Endothelial cell of umbilical vein (primary cell): ENCODE measurements at regions of chr2 and their contacts with region 1.

Region 1: DNA sequence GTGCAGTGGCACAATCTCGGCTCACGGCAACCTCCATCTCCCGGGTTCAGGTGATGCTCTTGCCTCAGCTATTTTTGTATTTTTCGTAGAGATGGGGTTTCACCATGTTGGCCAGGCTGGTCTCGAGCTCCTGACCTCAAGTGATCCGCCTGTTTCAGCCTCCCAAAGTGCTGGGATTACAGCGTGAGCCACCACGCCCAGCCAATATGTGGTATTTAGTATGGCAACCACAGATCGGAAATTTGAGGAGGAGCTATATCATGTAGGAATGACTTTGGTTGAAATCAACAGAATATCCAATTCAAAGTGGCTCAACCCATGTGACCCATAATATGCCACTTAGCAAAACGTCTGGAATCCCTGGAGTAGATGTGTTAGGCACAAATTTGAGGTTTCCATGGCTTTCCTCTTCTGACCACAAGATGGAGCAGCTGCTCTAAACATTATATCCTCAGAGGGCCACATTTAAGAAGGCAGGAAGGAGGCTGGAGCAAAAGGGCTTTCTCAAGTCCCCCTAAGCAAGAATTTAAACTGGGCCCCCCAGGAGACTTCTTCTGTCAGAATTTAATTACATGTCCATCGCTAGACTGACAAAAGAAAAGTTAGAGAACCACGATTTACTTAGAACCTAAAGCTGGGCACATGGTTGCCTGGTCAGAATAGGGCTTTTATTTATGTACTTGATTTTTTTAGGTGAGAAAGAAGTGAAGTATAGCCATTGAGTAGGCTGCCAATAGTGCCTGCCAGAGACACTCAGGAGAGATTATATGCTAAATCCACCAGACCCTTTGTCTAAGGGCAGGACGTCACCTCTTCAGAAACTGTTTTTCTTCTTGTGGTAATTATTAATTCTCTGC is 49.6 kb upstream of the ITSN2 start:
- DNase-seq: peak; percentile 68
- H3K4me3 ChIP-seq: no peak overlapping the region
- H3K27ac ChIP-seq: no peak overlapping the region
- H3K4me1 ChIP-seq: no peaks in the 10 kb centered on the region
- H3K27me3 ChIP-seq: no peaks in the 10 kb centered on the region
- CTCF ChIP-seq: peak; percentile 69 to 74
- POLR2A ChIP-seq: no peak

Region 2: DNA sequence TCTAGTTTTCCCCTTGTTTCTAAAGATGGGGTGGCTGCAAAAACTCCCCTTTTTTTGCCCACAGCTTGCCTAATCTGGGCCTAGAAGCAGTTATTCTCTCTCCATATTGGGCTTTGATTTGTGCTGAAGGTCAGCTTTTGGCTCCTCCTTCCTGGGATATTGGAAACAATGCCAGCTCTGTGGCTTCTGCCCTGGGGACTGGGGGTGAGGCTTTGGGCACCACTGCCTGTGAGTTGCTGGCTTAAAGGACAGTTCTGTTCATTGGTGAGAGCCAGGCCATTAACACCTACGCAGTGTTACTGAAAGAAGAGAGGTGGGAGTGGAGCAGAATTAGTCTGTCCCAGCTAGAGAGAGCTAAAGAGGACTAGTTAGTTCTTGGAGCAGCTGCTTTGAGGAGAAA is 465.4 kb before region 1 on chr2:
- CTCF ChIA-PET with region 1: no interaction called
- POLR2A ChIA-PET with region 1: no interaction called
- dilution Hi-C with region 1: no loop called
- intact Hi-C with region 1: no loop called
- DNase-seq: no peak
- H3K4me3 ChIP-seq: no peak overlapping the region
- H3K27ac ChIP-seq: no peak overlapping the region
- H3K4me1 ChIP-seq: peaks cover 10% of the 10 kb centered on the region
- H3K27me3 ChIP-seq: no peaks in the 10 kb centered on the region
- CTCF ChIP-seq: no peak
- POLR2A ChIP-seq: no peak

Region 3: DNA sequence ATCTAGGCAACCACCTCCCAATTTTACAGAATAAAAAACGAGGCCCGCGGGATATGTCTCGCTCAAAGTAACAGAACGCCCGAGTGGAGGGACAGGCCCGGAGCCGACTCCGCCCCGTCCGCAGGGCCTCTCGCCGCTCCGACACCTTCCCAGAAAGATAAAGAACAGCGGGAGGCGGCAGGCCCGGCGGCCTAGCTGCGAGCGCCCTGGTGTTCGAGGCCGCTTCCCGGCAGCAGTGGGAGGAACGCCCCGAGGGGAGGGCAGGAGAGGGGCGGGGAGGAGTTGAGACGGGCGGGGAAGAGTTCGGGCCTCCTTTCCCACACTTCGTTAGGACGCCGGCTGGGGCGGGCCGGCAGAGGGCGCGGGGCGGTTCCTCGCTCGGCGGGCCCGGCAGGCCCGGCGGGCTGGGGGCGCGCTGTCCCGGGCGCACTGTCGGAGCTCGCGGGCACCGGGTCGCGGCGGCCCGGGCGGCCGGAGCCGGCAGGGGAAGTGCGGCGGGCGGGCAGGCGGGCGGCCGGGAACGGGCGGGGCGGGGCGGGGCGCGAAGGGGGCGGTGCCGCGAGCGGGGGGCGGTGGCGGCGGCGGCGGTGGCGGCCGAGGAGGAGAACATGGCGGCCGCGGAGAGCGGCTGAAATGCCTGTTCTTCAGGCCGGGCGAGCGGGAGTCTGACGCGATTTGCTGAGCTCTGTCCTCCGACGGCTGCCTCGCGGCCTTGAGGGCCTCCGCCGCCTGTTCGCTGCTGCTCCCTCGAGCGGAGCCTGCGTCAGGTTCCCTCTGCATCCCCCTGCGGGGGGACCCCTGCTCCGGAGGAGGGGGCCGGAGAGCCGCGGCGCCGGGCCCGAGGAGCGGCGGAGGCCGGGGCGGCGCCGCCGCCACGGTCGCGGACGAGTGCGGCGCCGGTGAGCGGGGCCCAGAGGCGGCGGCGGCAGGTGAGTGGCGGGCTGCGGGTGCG is 81.0 kb after region 1 on chr2 and contains the start of gene NCOA1:
- CTCF ChIA-PET with region 1: interaction called, 3 read pairs
- POLR2A ChIA-PET with region 1: no interaction called
- dilution Hi-C with region 1: no loop called
- intact Hi-C with region 1: loop called (anchors 2 kb)
- DNase-seq: peak; percentile 84
- H3K4me3 ChIP-seq: peak within 1 kb of the TSS; percentile 62 to 78 (median 76)
- H3K27ac ChIP-seq: peak within 1 kb of the TSS; percentile 26
- H3K4me1 ChIP-seq: peaks cover 29% of the 10 kb centered on the region
- H3K27me3 ChIP-seq: peaks cover 0 to 3% of the 10 kb centered on the region in 2 experiments
- CTCF ChIP-seq: peak in 1 of 2 donors; percentile 29
- POLR2A ChIP-seq: no peak
- total RNA-seq, gene NCOA1: 10.9 and 14.1 TPM in 2 replicates

Region 4: GRCh38 chr2:24613154-24613814 is 203.4 kb after region 1 on chr2:
- CTCF ChIA-PET with region 1: interaction called, 14 read pairs
- POLR2A ChIA-PET with region 1: no interaction called
- dilution Hi-C with region 1: no loop called
- intact Hi-C with region 1: loop called (anchors 2 kb)
- DNase-seq: peak; percentile 45
- H3K4me3 ChIP-seq: no peak overlapping the region
- H3K27ac ChIP-seq: no peak overlapping the region
- H3K4me1 ChIP-seq: no peaks in the 10 kb centered on the region
- H3K27me3 ChIP-seq: no peaks in the 10 kb centered on the region
- CTCF ChIP-seq: peak; percentile 49 to 55
- POLR2A ChIP-seq: no peak

Region 5: GRCh38 chr2:25201265-25201664 is 791.3 kb after region 1 on chr2:
- CTCF ChIA-PET with region 1: interaction called, 11 read pairs
- POLR2A ChIA-PET with region 1: interaction called, 3 read pairs
- dilution Hi-C with region 1: no loop called
- intact Hi-C with region 1: loop called (anchors 2 kb)
- DNase-seq: no peak
- H3K4me3 ChIP-seq: no peak overlapping the region
- H3K27ac ChIP-seq: no peak overlapping the region
- H3K4me1 ChIP-seq: no peaks in the 10 kb centered on the region
- H3K27me3 ChIP-seq: no peaks in the 10 kb centered on the region
- CTCF ChIP-seq: peak in 1 of 2 donors; percentile 21
- POLR2A ChIP-seq: no peak